ENCODE measurements at regions of chr3 and their contacts with region 1.

Region 1: DNA sequence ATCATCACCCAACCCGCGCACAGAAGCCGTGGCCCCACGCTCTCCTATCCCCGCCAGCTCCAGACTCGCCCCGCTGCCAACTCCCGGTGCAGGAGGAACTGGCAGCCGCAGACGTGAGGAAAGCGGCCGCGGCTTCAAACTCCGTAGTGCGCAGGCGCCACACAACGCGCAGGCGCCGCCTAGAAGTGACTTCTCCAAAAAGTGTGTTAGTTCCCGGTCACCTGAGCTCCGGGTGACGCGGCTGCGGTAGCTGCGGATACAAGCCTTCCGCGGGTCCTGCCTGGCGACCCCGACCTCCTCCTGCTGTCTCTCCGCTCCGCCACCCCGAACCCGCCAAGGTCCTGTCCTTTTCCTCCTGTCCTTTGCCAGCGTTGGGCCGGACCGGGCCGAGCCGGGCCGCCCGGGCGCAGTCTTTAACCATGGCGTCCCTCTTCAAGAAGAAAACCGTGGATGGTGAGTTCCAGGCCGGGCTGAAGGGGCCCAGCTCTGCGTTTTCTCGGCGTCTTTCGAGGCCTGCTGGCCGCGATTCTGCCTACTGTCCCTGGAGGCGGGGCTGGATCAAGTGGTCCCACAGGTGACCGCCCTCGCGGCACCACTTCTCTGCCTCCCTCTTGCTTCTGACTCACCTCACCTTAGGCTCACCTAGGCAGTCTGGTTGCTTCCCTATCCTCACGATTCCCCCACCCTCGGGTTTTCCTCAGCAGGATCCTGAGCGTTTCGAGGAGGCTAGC is at the start of gene CHMP2B:
- DNase-seq: peak; percentile 88
- H3K4me3 Mint-ChIP-seq: peak within 1 kb of the TSS; percentile 100
- H3K27ac Mint-ChIP-seq: peak within 1 kb of the TSS; percentile 96
- H3K4me1 Mint-ChIP-seq: peaks cover 22% of the 10 kb centered on the region
- H3K27me3 Mint-ChIP-seq: peaks cover 15% of the 10 kb centered on the region
- total RNA-seq, gene CHMP2B: 25.0 and 25.2 TPM in 2 replicates

Region 2: GRCh38 chr3:88149509-88150362 is 922.5 kb after region 1 on chr3 and contains the start of gene C3orf38:
- intact Hi-C with region 1: loop called (anchors 1 kb)
- DNase-seq: peak; percentile 80
- H3K4me3 Mint-ChIP-seq: peak within 1 kb of the TSS; percentile 96
- H3K27ac Mint-ChIP-seq: peak within 1 kb of the TSS; percentile 99
- H3K4me1 Mint-ChIP-seq: peaks cover 27% of the 10 kb centered on the region
- H3K27me3 Mint-ChIP-seq: no peaks in the 10 kb centered on the region
- total RNA-seq, gene C3orf38: 23.1 and 25.4 TPM in 2 replicates